Natural killer cell (primary cell): ENCODE measurements at regions of chr21 and their contacts with region 1.

Region 1: DNA sequence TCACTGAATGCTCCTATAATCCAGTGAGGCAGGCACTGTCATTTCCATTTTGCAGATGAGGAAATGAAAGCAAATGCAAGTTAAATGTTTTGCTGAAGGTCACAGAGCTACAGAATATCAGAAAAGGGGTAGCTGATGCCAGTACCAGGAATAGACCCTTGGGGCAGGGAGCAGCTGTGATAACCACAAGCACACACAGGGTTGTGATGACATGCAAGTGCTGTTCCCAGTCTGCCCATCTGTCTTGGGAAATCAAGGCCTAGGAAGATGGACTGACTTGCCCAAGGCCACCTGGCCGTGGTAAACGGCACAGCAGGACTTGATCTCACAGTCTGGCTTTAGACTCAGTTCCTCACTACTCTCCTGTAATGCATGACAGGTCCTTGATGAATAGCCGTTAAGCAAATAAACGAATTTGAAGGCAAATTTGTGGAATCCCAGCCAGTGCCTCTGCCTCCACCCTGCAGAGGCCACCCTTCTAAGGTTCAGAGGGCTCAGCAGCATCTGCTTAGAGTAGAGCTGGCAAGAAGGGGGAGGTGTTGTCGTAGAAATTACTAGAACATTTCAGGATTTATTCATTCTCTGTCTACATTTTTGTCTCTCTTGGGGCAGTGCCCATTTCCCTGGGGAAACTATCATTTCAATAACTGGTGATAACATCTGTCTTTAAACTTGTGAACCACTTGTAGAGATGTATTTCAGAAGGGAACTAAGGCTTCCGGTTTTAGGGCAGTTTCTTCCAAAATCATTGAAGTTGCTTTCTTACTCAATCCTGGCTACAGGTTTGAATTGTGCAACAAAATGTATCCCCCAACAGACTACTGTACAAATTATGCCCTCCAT is 53.2 kb upstream of the MRPS6 start:
- DNase-seq: no peak
- ATAC-seq: no peak
- H3K4me3 ChIP-seq: no peak overlapping the region
- H3K4me3 Mint-ChIP-seq: peak overlapping the region; percentile 66
- H3K27ac ChIP-seq: peak overlapping the region; percentile 44
- H3K27ac Mint-ChIP-seq: no peak overlapping the region
- H3K4me1 ChIP-seq: peaks cover 57% of the 10 kb centered on the region
- H3K4me1 Mint-ChIP-seq: peaks cover 0 to 45% of the 10 kb centered on the region in 2 donors
- H3K27me3 ChIP-seq: no peaks in the 10 kb centered on the region
- H3K27me3 Mint-ChIP-seq: no peaks in the 10 kb centered on the region
- CTCF ChIP-seq: no peak

Region 2: GRCh38 chr21:33976082-33977016 is 43.9 kb before region 1 on chr21:
- intact Hi-C with region 1: loop called (anchors 1 kb)
- DNase-seq: peak; percentile 26 to 75
- ATAC-seq: peak; percentile 43 to 60 (median 53)
- H3K4me3 ChIP-seq: no peak overlapping the region
- H3K4me3 Mint-ChIP-seq: peak overlapping the region; percentile 76
- H3K27ac ChIP-seq: peak overlapping the region; percentile 95
- H3K27ac Mint-ChIP-seq: peak overlapping the region; percentile 93 to 98
- H3K4me1 ChIP-seq: peaks cover 44% of the 10 kb centered on the region
- H3K4me1 Mint-ChIP-seq: peaks cover 61 to 66% of the 10 kb centered on the region in 2 donors
- H3K27me3 ChIP-seq: no peaks in the 10 kb centered on the region
- H3K27me3 Mint-ChIP-seq: no peaks in the 10 kb centered on the region
- CTCF ChIP-seq: no peak

Region 3: DNA sequence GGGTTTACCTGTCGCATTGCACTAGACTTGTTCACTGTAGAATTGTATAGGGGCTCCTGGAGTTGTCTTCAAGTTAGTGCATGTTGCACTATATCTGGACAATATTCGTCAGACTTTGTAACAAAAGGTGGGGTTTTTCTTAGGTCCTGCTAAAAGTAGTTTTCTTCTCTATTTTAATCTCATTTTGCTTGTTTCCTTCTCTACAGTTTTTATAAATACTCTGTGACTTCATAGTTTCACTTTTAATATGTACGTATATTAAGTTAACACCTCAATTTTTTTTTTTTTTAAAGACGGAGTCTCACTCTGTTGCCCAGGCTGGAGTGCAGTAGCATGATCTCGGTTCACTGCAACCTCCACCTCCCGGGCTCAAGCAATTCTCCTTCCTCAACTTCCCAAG is 26.7 kb after region 1 on chr21:
- intact Hi-C with region 1: loop called (anchors 2 kb)
- DNase-seq: no peak
- ATAC-seq: peak; percentile 83 to 96 (median 93)
- H3K4me3 ChIP-seq: peak overlapping the region; percentile 20
- H3K4me3 Mint-ChIP-seq: peak overlapping the region; percentile 81
- H3K27ac ChIP-seq: peak overlapping the region; percentile 60
- H3K27ac Mint-ChIP-seq: peak overlapping the region; percentile 82 to 86
- H3K4me1 ChIP-seq: peaks cover 4% of the 10 kb centered on the region
- H3K4me1 Mint-ChIP-seq: peaks cover 6 to 8% of the 10 kb centered on the region in 2 donors
- H3K27me3 ChIP-seq: no peaks in the 10 kb centered on the region
- H3K27me3 Mint-ChIP-seq: no peaks in the 10 kb centered on the region
- CTCF ChIP-seq: no peak

Region 4: DNA sequence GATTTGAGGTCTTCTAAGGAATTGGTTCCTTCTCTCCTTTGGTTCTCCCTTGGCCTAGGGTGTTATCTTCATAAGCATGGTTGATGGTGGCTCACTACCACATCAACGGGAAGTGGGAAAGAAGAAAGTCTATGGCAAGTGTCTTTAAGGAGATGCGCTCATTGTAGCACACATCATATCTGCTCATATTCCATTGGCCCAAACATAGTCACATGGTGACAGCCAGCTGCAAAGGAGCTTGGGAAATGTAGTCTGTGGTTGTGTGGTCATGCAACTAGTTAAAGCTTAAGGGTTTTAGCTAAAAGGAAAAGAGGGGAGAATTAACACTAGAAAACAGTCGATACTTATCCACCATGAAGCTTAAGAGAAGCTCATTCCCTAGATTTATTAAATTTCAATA is 41.8 kb after region 1 on chr21:
- intact Hi-C with region 1: no loop called
- DNase-seq: no peak
- ATAC-seq: no peak
- H3K4me3 ChIP-seq: no peak overlapping the region
- H3K4me3 Mint-ChIP-seq: no peak overlapping the region
- H3K27ac ChIP-seq: no peak overlapping the region
- H3K27ac Mint-ChIP-seq: no peak overlapping the region
- H3K4me1 ChIP-seq: no peaks in the 10 kb centered on the region
- H3K4me1 Mint-ChIP-seq: no peaks in the 10 kb centered on the region
- H3K27me3 ChIP-seq: no peaks in the 10 kb centered on the region
- H3K27me3 Mint-ChIP-seq: no peaks in the 10 kb centered on the region
- CTCF ChIP-seq: no peak

Region 5: GRCh38 chr21:34202553-34203372 is 182.5 kb after region 1 on chr21:
- intact Hi-C with region 1: loop called (anchors 5 kb)
- DNase-seq: no peak
- ATAC-seq: peak in 1 of 3 donors; percentile 32
- H3K4me3 ChIP-seq: peak overlapping the region; percentile 31
- H3K4me3 Mint-ChIP-seq: peak overlapping the region; percentile 92
- H3K27ac ChIP-seq: no peak overlapping the region
- H3K27ac Mint-ChIP-seq: peak overlapping the region in 1 of 2 donors; percentile 85
- H3K4me1 ChIP-seq: peaks cover 45% of the 10 kb centered on the region
- H3K4me1 Mint-ChIP-seq: peaks cover 42 to 49% of the 10 kb centered on the region in 2 donors
- H3K27me3 ChIP-seq: peaks cover 2% of the 10 kb centered on the region
- H3K27me3 Mint-ChIP-seq: peaks cover 0 to 2% of the 10 kb centered on the region in 2 donors
- CTCF ChIP-seq: no peak